ENCODE measurements at regions of chr13 and their contacts with region 1.

Region 1: DNA sequence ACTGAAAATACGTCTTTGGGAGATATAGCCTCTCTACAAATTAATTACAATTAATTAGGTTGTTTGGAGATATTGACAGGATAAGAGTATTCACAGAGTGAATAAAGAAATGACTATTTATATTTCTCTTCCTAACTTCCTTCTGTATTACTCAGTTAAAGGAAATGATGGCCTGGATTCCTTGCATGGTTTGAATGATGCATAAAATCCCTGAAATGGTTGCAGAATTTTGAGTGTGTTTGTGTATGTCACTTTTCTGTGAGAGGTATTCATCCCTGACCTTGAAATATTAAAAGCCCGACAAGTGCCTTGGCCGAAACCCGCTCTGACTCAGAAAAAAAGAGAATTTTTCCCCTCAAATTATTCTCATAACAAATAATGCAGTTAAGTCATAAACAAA is 90.0 kb downstream of the PDS5B start:
- DNase-seq: peak; percentile 34
- H3K4me3 ChIP-seq: no peak overlapping the region
- H3K27ac ChIP-seq: no peak overlapping the region
- H3K4me1 ChIP-seq: peaks cover 13% of the 10 kb centered on the region
- H3K27me3 ChIP-seq: no peaks in the 10 kb centered on the region
- CTCF ChIP-seq: no peak
- POLR2A ChIP-seq: no peak

Region 2: DNA sequence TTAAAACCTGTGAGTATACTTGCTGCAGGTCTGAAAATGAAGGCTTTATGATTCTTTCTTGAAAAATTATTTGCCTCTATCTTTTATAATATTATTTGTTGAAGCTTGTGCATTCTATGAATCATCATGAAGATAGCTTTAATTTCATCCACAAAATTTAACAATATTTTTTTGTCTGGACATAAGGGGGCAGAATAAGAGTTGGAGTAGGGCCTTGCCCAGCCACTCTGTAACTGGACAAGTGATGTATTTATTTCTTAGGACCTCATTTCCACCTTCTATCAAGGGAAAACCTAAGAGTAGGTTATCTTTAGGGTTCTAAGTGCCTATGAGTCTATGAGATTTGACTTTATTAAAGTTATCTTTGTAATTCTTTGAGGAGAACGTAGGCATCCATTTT is 298.2 kb before region 1 on chr13:
- CTCF ChIA-PET with region 1: no interaction called
- POLR2A ChIA-PET with region 1: no interaction called
- dilution Hi-C with region 1: no loop called
- intact Hi-C with region 1: no loop called
- DNase-seq: no peak
- H3K4me3 ChIP-seq: no peak overlapping the region
- H3K27ac ChIP-seq: no peak overlapping the region
- H3K4me1 ChIP-seq: peaks cover 2% of the 10 kb centered on the region
- H3K27me3 ChIP-seq: no peaks in the 10 kb centered on the region
- CTCF ChIP-seq: no peak
- POLR2A ChIP-seq: no peak

Region 3: GRCh38 chr13:32707471-32707870 is 31.2 kb after region 1 on chr13:
- CTCF ChIA-PET with region 1: interaction called, 5 read pairs
- POLR2A ChIA-PET with region 1: no interaction called
- dilution Hi-C with region 1: no loop called
- intact Hi-C with region 1: loop called (anchors 1 kb)
- DNase-seq: no peak
- H3K4me3 ChIP-seq: no peak overlapping the region
- H3K27ac ChIP-seq: no peak overlapping the region
- H3K4me1 ChIP-seq: no peaks in the 10 kb centered on the region
- H3K27me3 ChIP-seq: no peaks in the 10 kb centered on the region
- CTCF ChIP-seq: no peak
- POLR2A ChIP-seq: no peak